Naive thymus-derived CD4-positive, alpha-beta T cell (primary cell): ENCODE measurements at regions of chr4 and their contacts with region 1.

Region 1: DNA sequence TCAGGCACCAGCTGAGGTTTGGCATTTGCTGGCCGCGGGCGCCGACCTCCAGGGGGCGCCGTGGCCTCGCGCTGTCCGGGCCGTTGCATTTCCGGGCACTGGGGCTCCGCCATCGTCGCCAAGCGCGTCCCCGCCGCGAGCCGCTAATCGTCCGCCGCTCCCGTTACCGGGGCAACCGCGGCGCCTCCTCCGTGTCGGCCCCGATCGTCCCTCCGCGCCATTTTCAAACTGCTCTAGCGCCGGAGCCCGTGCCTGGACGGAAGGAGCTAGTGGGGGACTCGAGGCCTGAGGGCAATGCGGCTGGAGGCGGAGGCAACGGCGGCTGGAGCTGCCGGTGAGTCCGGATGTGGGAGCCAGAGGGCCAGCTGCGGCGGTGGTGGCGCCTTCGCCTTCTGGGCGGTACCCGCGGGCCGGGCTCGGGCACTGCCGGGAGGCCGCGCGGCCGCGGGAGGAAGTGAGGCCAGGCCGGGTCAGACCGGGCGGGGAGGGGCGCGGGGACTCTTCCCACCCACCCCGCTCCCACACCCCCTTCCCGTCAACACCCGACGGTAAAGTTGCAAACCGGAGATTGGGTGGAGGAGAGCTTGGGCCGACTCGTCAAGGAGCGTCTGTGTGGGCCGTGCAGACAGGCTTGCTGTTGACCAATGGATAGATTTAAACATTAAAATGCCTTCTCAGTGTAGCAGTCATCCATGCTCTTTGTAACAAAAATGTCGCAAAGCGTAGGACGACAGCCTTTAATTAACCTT is at the start of gene CEP135:
- DNase-seq: peak; percentile 84 to 94 (median 90)
- ATAC-seq: peak; percentile 88
- H3K4me3 ChIP-seq: peak within 1 kb of the TSS; percentile 88
- H3K4me3 Mint-ChIP-seq: peak within 1 kb of the TSS; percentile 86 to 96 (median 92)
- H3K27ac ChIP-seq: peak within 1 kb of the TSS; percentile 71
- H3K27ac Mint-ChIP-seq: peak within 1 kb of the TSS; percentile 90 to 98 (median 94)
- H3K4me1 ChIP-seq: peaks cover 14 to 15% of the 10 kb centered on the region in 2 donors
- H3K4me1 Mint-ChIP-seq: peaks cover 30 to 69% (median 51%) of the 10 kb centered on the region in 7 donors
- H3K27me3 ChIP-seq: no peaks in the 10 kb centered on the region
- H3K27me3 Mint-ChIP-seq: no peaks in the 10 kb centered on the region
- total RNA-seq, gene CEP135: 20.6 to 38.8 (median 24.6) TPM

Region 2: GRCh38 chr4:55395529-55396307 is 553.2 kb before region 1 on chr4 and contains the start of gene TMEM165:
- CTCF ChIA-PET with region 1: no interaction called
- POLR2A ChIA-PET with region 1: no interaction called
- intact Hi-C with region 1: loop called (anchors 2 kb)
- DNase-seq: peak; percentile 77 to 92 (median 87)
- ATAC-seq: peak; percentile 94
- H3K4me3 ChIP-seq: peak within 1 kb of the TSS; percentile 88
- H3K4me3 Mint-ChIP-seq: peak within 1 kb of the TSS; percentile 94 to 99 (median 96)
- H3K27ac ChIP-seq: peak within 1 kb of the TSS; percentile 89
- H3K27ac Mint-ChIP-seq: peak within 1 kb of the TSS; percentile 89 to 99 (median 96)
- H3K4me1 ChIP-seq: peaks cover 27 to 31% of the 10 kb centered on the region in 2 donors
- H3K4me1 Mint-ChIP-seq: peaks cover 29 to 49% (median 39%) of the 10 kb centered on the region in 7 donors
- H3K27me3 ChIP-seq: no peaks in the 10 kb centered on the region
- H3K27me3 Mint-ChIP-seq: no peaks in the 10 kb centered on the region
- total RNA-seq, gene TMEM165: 53.1 to 80.9 (median 58.9) TPM

Region 3: GRCh38 chr4:55887594-55887993 is 61.3 kb before region 1 on chr4:
- CTCF ChIA-PET with region 1: interaction called, 7 read pairs
- POLR2A ChIA-PET with region 1: interaction called, 5 read pairs
- intact Hi-C with region 1: loop called in 1 of 2 experiments (anchors 5 kb)
- DNase-seq: no peak
- ATAC-seq: no peak
- H3K4me3 ChIP-seq: no peak overlapping the region
- H3K4me3 Mint-ChIP-seq: no peak overlapping the region
- H3K27ac ChIP-seq: no peak overlapping the region
- H3K27ac Mint-ChIP-seq: peak overlapping the region in 5 of 9 donors; percentile 47 to 83 (median 57)
- H3K4me1 ChIP-seq: no peaks in the 10 kb centered on the region
- H3K4me1 Mint-ChIP-seq: peaks cover 6 to 52% (median 29%) of the 10 kb centered on the region in 7 donors
- H3K27me3 ChIP-seq: no peaks in the 10 kb centered on the region
- H3K27me3 Mint-ChIP-seq: no peaks in the 10 kb centered on the region

Region 4: GRCh38 chr4:56387023-56388001 is 438.4 kb after region 1 on chr4 and contains the start of gene AASDH:
- CTCF ChIA-PET with region 1: no interaction called
- POLR2A ChIA-PET with region 1: interaction called, 3 read pairs
- intact Hi-C with region 1: loop called (anchors 1 kb)
- DNase-seq: peak; percentile 92 to 98 (median 94)
- ATAC-seq: peak; percentile 95
- H3K4me3 ChIP-seq: peak within 1 kb of the TSS; percentile 94
- H3K4me3 Mint-ChIP-seq: peak within 1 kb of the TSS; percentile 87 to 99 (median 96)
- H3K27ac ChIP-seq: peak within 1 kb of the TSS; percentile 92
- H3K27ac Mint-ChIP-seq: peak within 1 kb of the TSS; percentile 97 to 100 (median 98)
- H3K4me1 ChIP-seq: peaks cover 15 to 18% of the 10 kb centered on the region in 2 donors
- H3K4me1 Mint-ChIP-seq: peaks cover 19 to 60% (median 47%) of the 10 kb centered on the region in 7 donors
- H3K27me3 ChIP-seq: no peaks in the 10 kb centered on the region
- H3K27me3 Mint-ChIP-seq: no peaks in the 10 kb centered on the region
- total RNA-seq, gene AASDH: 10.2 to 24.7 (median 15.8) TPM

Region 5: GRCh38 chr4:56544573-56545131 is 595.8 kb after region 1 on chr4:
- CTCF ChIA-PET with region 1: no interaction called
- POLR2A ChIA-PET with region 1: no interaction called
- intact Hi-C with region 1: loop called in 1 of 2 experiments (anchors 5 kb)
- DNase-seq: peak; percentile 72 to 93 (median 84)
- ATAC-seq: peak; percentile 100
- H3K4me3 ChIP-seq: peak overlapping the region; percentile 68
- H3K4me3 Mint-ChIP-seq: peak overlapping the region; percentile 18 to 81 (median 74)
- H3K27ac ChIP-seq: no peak overlapping the region
- H3K27ac Mint-ChIP-seq: peak overlapping the region in 7 of 9 donors; percentile 25 to 79 (median 63)
- H3K4me1 ChIP-seq: peaks cover 0 to 4% of the 10 kb centered on the region in 2 donors
- H3K4me1 Mint-ChIP-seq: peaks cover 8 to 22% (median 21%) of the 10 kb centered on the region in 7 donors
- H3K27me3 ChIP-seq: no peaks in the 10 kb centered on the region
- H3K27me3 Mint-ChIP-seq: peaks cover 0 to 25% (median 7%) of the 10 kb centered on the region in 5 donors